MCF 10A (cell line): ENCODE measurements at regions of chr6 and their contacts with region 1.

Region 1: DNA sequence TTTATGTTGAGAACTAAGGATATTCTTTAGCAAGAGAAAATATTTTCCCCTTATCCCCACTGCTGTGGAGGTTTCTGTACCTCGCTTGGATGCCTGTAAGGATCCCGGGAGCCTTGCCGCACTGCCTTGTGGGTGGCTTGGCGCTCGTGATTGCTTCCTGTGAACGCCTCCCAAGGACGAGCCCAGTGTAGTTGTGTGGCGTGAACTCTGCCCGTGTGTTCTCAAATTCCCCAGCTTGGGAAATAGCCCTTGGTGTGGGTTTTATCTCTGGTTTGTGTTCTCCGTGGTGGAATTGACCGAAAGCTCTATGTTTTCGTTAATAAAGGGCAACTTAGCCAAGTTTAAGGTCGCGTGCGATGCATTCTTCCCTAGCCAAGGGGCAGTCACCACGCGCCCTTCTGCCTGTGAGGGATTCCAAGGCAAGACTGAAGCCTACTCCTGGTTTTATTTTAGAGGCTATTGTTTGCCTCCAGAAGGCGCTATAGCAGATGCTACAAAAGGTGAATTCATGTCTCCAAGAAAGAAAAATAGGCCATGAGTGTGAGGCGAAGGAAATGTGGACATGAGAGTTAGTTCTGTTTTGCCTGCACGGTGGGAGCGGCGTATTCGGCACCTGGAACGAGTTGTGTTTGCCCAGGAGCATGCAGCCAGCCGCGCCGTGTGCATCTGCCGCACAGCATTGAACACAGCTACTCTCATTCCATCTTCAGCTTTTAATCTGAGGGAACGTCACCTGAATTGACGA is 40.4 kb upstream of the IRF4 start:
- DNase-seq: no peak
- H3K4me3 Mint-ChIP-seq: no peak overlapping the region
- H3K27ac Mint-ChIP-seq: no peak overlapping the region
- H3K4me1 Mint-ChIP-seq: no peaks in the 10 kb centered on the region
- H3K27me3 Mint-ChIP-seq: no peaks in the 10 kb centered on the region
- CTCF ChIP-seq: no peak

Region 2: GRCh38 chr6:305371-306206 is 45.6 kb before region 1 on chr6:
- CTCF ChIA-PET with region 1: no interaction called
- POLR2A ChIA-PET with region 1: no interaction called
- intact Hi-C with region 1: no loop called
- DNase-seq: no peak
- H3K4me3 Mint-ChIP-seq: no peak overlapping the region
- H3K27ac Mint-ChIP-seq: no peak overlapping the region
- H3K4me1 Mint-ChIP-seq: peaks cover 5% of the 10 kb centered on the region
- H3K27me3 Mint-ChIP-seq: no peaks in the 10 kb centered on the region
- CTCF ChIP-seq: no peak

Region 3: DNA sequence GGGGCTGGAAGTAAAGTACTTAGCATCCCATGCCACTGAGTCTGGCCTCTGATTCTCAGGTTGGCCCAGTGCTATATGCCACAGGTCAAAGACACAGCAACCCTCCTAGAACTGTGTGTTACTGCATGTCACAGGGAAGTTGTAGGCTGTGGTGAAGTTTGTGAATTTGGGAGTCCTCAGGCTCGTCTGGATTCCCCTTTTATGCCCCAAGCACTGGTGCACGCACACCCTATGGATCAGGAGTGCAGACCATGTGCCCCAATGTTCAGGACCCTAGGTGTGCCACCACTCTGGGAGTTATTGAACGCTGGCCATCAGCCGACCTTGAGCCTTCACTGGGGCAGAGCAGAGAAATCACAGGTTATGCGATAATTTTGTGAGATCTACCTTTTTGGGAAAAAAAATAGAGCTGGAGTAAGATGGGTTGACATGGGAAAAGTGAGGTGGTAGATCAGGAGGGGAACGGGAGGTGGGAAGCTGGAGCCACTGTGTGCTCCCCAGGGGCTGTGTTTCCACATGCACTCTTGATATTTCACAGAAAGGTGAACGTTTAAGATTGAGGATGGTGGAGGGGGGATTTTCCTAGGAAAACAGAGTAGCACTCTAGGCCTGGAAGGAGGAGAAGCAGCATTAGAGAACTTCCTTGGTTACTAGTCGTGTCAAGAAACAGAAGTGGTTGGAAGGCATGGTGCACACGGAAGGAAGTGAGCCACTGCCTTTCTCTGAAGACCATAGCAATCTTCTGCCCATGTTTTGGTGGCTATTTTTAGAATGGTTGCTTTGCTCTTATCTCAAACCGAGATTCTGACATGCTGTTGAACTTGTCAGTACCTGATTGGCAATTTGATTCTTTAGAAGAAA is 14.8 kb before region 1 on chr6:
- CTCF ChIA-PET with region 1: interaction called, 16 read pairs
- POLR2A ChIA-PET with region 1: interaction called, 5 read pairs
- intact Hi-C with region 1: no loop called
- DNase-seq: no peak
- H3K4me3 Mint-ChIP-seq: no peak overlapping the region
- H3K27ac Mint-ChIP-seq: no peak overlapping the region
- H3K4me1 Mint-ChIP-seq: no peaks in the 10 kb centered on the region
- H3K27me3 Mint-ChIP-seq: no peaks in the 10 kb centered on the region
- CTCF ChIP-seq: no peak

Region 4: DNA sequence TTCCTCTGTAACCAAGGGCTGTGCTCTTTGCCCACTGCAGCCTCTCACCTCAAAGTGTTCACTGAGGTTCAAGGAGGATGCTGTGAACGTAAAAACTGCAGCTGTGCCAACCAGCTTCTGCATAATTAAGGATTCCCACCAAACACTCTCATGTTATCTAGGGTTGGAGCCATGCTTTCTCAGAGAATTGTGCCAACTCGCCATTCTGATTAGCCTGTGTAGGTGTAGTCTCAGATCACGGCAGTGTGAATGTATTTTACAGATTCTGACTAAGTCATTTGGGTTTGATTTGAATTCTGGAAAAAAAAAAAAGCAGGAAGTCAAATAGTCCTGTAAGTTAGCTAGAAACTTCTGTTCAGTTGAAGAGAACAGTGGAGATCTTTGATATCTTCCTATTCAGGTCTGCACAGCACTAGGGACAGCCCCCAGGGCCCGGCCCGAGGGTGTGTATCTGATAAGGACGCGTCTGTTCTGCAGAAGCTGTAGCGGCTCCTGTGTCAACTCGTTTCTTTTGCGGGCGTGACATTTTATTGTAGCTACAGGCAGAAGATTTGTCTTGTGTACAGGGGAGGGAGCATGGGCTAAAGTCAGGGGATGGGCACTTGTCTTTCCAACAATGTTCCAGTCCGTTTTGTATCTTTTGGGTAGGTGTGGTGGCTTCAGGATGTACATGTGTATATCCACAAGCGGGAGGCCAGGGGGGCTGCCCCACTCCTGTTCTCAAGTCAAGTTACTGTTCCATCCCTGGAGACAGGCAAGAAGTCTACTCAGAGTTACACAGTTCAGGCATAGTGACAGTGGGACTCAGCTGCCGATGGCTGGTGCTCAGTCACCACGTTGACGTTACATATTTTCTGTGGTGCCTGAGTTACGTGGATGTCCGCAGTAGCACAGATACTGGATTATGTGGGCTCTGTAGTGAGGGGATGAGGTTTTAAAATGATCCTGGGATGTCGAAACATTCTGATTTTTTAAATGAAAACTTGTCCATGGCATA is 52.8 kb after region 1 on chr6:
- CTCF ChIA-PET with region 1: no interaction called
- POLR2A ChIA-PET with region 1: no interaction called
- intact Hi-C with region 1: no loop called
- DNase-seq: no peak
- H3K4me3 Mint-ChIP-seq: no peak overlapping the region
- H3K27ac Mint-ChIP-seq: no peak overlapping the region
- H3K4me1 Mint-ChIP-seq: no peaks in the 10 kb centered on the region
- H3K27me3 Mint-ChIP-seq: peaks cover 13% of the 10 kb centered on the region
- CTCF ChIP-seq: no peak

Region 5: DNA sequence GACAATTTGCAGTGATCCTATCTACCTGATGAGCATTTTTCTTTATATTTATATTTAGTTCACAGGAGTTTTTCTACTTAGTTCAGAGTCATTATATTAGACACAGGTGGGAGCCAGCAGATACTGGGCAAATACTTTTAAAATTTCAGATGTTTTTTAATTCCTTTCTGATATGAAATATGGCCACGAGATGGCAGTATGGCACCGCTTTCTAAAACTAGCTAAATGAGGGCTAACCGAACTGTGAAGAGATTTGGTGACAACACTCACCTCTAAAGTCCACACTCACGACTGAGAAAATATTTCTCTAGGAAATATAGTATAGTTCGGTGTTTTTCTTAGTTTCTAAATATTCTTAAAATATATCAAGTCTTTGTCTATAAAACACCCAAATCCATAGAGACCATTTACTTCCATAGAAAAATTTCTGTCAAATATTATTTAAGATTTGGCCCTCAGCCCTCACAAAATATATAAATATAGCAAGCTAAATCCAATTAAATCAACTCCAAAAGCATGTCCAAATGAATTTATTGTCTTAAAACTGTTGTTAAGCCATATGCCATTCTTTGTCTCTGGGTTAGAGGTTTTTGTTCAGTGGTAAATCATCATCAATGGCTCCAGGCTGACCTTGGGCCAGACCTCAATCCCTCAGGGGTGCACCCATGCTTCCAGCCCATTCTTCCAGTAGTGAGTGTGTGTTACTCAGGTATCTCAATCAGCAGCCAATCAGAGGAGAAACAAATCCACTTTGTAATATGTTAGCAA is 242.1 kb after region 1 on chr6:
- CTCF ChIA-PET with region 1: no interaction called
- POLR2A ChIA-PET with region 1: no interaction called
- intact Hi-C with region 1: no loop called
- DNase-seq: peak; percentile 69
- H3K4me3 Mint-ChIP-seq: no peak overlapping the region
- H3K27ac Mint-ChIP-seq: no peak overlapping the region
- H3K4me1 Mint-ChIP-seq: no peaks in the 10 kb centered on the region
- H3K27me3 Mint-ChIP-seq: no peaks in the 10 kb centered on the region
- CTCF ChIP-seq: peak; percentile 48